Left cardiac atrium (tissue), 4 donors: ENCODE measurements at regions of chr5 and their contacts with region 1.

Region 1: GRCh38 chr5:57662991-57663390 is 180.4 kb upstream of the ACTBL2 start:
- DNase-seq: no peak
- ATAC-seq: peak; percentile 38 to 80

Region 2: DNA sequence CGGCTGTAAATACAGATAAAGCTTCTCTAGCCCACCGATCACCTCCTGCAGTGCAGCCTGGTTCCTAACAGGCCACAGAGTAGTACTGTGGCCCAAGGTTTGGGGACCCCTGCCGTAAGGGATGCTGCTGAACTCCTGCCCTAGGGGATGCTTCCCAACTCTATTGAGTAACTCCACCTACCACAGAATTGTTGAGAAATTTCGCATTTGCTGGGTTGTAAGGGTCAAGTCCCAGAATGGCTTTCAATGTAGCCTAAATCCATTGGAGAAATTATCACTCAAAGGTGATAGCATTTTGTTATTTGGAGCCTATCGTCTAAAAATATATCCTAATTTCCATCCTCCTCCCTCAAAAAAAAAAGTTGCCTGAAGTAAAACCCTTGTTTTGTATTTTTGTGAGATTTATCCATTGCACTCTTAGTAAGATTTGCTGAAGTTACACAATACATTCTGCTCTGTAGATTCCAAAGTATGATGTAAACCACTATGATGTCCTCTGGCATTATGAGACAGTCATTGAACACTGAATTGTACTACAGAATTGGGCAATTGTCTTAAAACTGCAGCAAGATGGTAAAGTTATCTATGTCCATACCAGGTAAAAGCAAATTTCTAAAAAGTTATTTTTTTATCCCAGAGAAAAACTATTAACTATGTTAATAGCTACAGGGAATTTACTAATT is 194.4 kb before region 1 on chr5:
- intact Hi-C with region 1: no loop called
- DNase-seq: no peak
- ATAC-seq: no peak

Region 3: GRCh38 chr5:57698769-57699168 is 35.8 kb after region 1 on chr5:
- intact Hi-C with region 1: loop called in 1 of 2 experiments (anchors 5 kb)
- DNase-seq: no peak
- ATAC-seq: no peak